ENCODE measurements at regions of chr6 and their contacts with region 1.

Region 1: GRCh38 chr6:106339334-106340029 is 13.9 kb upstream of the ATG5 start:
- DNase-seq: peak; percentile 84
- H3K4me3 ChIP-seq: no peak overlapping the region
- H3K27ac ChIP-seq: no peak overlapping the region
- H3K4me1 ChIP-seq: no peaks in the 10 kb centered on the region
- H3K27me3 ChIP-seq: no peaks in the 10 kb centered on the region
- CTCF ChIP-seq: peak; percentile 88

Region 2: GRCh38 chr6:106390088-106390487 is 50.6 kb after region 1 on chr6:
- CTCF ChIA-PET with region 1: no interaction called
- POLR2A ChIA-PET with region 1: no interaction called
- intact Hi-C with region 1: no loop called
- DNase-seq: peak; percentile 44
- H3K4me3 ChIP-seq: no peak overlapping the region
- H3K27ac ChIP-seq: no peak overlapping the region
- H3K4me1 ChIP-seq: peaks cover 39% of the 10 kb centered on the region
- H3K27me3 ChIP-seq: no peaks in the 10 kb centered on the region
- CTCF ChIP-seq: no peak

Region 3: DNA sequence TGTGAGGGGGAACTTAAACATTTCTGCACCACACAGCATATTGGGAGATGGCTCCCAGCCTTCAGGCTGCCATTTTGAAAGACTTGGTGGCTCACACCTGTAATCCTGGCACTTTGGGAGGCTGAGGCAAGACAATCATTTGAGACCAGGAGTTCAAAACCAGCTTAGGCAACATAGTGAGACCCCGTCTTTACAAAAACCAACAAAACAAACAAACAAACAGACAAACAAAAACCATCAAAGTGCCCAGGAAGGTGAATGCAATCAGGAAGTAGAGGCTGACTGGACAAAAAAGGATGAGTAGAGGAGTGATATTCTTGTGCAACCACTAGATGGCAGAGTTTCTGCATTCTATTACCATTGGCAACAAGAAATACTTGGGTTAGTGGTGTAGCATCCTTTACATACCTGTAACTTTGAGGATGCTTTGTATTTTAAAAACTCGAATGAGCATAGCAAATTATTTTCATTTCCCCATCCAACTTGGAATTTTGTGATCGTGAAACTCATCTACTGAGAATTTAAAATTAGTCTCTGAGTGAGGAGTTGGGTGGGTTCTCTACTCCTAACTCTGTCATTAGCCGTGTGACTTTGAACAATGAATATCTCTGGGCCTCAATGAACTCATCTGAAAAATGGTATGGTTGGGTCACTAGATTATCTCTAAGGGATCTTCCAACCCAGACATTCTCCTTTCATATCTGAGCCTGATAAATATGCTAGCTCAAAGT is 105.5 kb after region 1 on chr6:
- CTCF ChIA-PET with region 1: interaction called, 3 read pairs
- POLR2A ChIA-PET with region 1: no interaction called
- intact Hi-C with region 1: loop called (anchors 5 kb)
- DNase-seq: peak; percentile 72
- H3K4me3 ChIP-seq: no peak overlapping the region
- H3K27ac ChIP-seq: no peak overlapping the region
- H3K4me1 ChIP-seq: peaks cover 4% of the 10 kb centered on the region
- H3K27me3 ChIP-seq: peaks cover 12% of the 10 kb centered on the region
- CTCF ChIP-seq: peak; percentile 79

Region 4: DNA sequence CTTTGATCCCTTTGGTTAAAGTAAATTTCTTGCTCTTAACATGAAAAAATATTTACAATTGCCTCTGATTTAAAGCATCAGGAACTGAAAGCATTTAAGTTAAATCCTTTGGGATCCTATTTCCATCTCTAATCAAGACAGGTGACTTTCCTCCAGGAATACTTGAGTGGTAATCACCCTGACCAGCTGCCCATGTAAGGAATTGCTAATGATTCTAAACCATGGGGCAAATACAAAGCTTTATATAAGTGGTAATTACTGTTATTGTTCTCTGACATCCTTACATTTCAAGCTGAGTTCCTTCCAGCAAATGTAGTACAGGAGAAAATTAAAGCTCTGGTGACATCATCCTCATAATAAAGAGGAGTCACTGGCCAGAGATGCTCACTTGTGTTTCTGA is 121.6 kb after region 1 on chr6:
- CTCF ChIA-PET with region 1: no interaction called
- POLR2A ChIA-PET with region 1: interaction called, 20 read pairs
- intact Hi-C with region 1: no loop called
- DNase-seq: no peak
- H3K4me3 ChIP-seq: no peak overlapping the region
- H3K27ac ChIP-seq: no peak overlapping the region
- H3K4me1 ChIP-seq: no peaks in the 10 kb centered on the region
- H3K27me3 ChIP-seq: peaks cover 7% of the 10 kb centered on the region
- CTCF ChIP-seq: no peak

Region 5: DNA sequence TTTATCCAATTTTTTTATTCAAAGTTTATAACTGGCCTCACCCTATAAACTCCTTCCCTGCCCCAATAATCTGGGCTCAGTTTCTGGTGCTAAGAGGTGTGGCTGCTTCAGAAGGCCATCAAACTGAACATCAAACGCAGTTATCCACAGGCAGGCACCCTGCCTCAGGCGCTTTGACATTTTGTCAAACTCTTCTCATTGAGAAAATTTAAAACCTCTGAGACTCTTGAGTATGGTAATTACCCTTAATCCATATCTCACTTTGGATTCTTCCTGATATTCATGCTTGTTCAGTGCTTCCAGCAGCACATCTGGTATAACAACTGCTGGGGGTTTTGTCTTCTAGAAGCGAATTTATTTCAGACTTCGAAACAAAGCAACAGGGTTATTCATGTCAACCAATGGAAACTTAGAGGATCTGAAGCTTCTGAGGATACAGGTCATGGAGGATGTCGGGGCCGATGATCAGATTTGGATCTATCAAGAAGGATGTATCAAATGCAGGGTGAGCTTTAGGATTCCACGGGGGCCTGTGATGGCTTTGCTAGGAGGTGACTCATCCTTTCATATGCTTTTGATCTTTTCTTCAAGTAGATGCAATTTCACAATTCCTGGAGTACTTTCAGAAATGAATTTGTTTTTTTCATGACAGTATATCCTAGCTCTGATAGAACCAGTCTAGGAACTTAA is 221.7 kb after region 1 on chr6:
- CTCF ChIA-PET with region 1: interaction called, 14 read pairs
- POLR2A ChIA-PET with region 1: no interaction called
- intact Hi-C with region 1: loop called (anchors 2 kb)
- DNase-seq: no peak
- H3K4me3 ChIP-seq: no peak overlapping the region
- H3K27ac ChIP-seq: no peak overlapping the region
- H3K4me1 ChIP-seq: no peaks in the 10 kb centered on the region
- H3K27me3 ChIP-seq: no peaks in the 10 kb centered on the region
- CTCF ChIP-seq: no peak

Region 6: GRCh38 chr6:106979427-106979884 is 640.0 kb after region 1 on chr6:
- CTCF ChIA-PET with region 1: interaction called, 8 read pairs
- POLR2A ChIA-PET with region 1: no interaction called
- intact Hi-C with region 1: loop called (anchors 2 kb)
- DNase-seq: peak; percentile 88
- H3K4me3 ChIP-seq: no peak overlapping the region
- H3K27ac ChIP-seq: no peak overlapping the region
- H3K4me1 ChIP-seq: no peaks in the 10 kb centered on the region
- H3K27me3 ChIP-seq: peaks cover 28% of the 10 kb centered on the region
- CTCF ChIP-seq: peak; percentile 96

Region 7: DNA sequence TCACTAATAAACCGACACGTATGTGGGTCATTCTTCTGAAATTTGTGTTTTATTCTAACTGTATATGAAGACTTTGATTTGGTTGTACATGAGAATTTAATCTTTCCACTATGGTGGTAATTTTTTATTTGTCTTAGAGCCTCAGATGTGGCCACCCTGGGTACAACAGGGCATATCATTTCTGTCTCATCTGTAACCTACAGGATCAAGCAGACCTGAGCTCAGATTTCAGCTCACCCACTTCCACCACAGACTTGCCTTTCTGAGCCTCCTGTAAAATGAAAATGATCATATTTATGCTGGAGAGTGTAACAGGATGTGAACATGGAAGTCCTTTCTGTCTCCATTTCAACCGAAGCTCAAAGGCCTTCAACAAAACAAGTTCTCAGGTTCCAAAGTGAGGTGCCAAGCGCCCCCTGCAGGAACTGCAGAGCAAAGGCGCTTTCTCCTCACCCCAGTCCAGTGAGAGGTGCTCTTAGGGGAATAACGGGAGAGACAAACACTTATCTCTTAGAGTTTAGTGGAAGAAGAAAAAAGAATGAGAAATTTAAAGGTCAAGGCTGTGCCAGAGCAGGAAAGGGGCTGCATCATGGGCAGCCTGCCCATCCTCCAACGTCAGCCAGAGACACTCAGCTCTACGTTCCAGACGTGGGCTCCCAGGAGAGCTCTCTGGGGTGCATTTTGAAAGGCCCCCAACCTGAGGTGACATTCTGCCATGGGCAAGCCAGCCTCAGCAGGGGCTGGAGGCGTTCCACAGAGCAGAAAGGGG is 658.1 kb after region 1 on chr6:
- CTCF ChIA-PET with region 1: interaction called, 4 read pairs
- POLR2A ChIA-PET with region 1: no interaction called
- intact Hi-C with region 1: loop called (anchors 5 kb)
- DNase-seq: peak; percentile 77
- H3K4me3 ChIP-seq: no peak overlapping the region
- H3K27ac ChIP-seq: no peak overlapping the region
- H3K4me1 ChIP-seq: no peaks in the 10 kb centered on the region
- H3K27me3 ChIP-seq: no peaks in the 10 kb centered on the region
- CTCF ChIP-seq: peak; percentile 97

Region 8: DNA sequence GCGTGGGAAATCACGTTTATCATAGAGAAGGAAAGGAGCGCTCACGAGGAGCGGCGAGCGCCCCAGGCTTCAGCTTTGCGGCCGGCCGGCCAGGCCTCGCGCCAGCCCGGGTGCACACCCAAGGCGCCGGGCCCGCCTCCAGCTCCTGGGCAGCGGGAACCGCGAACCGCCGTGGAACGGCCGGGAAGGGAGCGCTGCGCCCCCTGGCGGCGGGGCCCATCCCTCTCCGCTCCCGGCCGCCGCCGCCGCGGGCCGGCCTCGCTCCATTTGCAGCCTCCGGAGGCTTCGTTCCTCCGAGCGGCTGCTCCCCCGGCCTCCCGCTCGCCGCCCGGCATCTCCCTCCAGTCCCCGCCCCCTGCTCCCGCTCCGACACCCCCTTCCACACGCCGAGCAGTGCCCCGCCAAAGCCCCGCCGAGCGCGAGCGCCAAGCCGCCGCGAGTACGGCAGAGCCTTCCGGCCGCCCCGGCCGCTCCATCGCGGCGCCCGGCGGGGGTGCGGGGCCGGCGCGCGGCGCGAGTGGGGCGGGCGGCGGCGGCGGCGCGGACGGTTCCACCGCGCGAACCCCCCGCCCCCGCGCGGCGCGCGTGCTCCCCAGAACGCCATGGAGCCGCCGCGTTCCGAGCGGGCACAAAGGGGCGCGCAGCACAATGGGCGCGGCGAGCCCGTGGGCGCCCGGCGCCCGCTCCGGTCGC is 774.9 kb after region 1 on chr6:
- CTCF ChIA-PET with region 1: no interaction called
- POLR2A ChIA-PET with region 1: no interaction called
- intact Hi-C with region 1: loop called (anchors 5 kb)
- DNase-seq: peak; percentile 90
- H3K4me3 ChIP-seq: peak overlapping the region; percentile 72
- H3K27ac ChIP-seq: peak overlapping the region; percentile 77
- H3K4me1 ChIP-seq: peaks cover 16% of the 10 kb centered on the region
- H3K27me3 ChIP-seq: no peaks in the 10 kb centered on the region
- CTCF ChIP-seq: peak; percentile 56